ENCODE measurements at regions of chr9 and their contacts with region 1.

Region 1: GRCh38 chr9:613771-614347 is 227.6 kb upstream of the DMRT1 start:
- DNase-seq: peak; percentile 52 to 68
- H3K4me3 ChIP-seq: no peak overlapping the region
- H3K27ac ChIP-seq: no peak overlapping the region
- H3K4me1 ChIP-seq: no peaks in the 10 kb centered on the region
- H3K27me3 ChIP-seq: no peaks in the 10 kb centered on the region
- CTCF ChIP-seq: peak; percentile 72

Region 2: DNA sequence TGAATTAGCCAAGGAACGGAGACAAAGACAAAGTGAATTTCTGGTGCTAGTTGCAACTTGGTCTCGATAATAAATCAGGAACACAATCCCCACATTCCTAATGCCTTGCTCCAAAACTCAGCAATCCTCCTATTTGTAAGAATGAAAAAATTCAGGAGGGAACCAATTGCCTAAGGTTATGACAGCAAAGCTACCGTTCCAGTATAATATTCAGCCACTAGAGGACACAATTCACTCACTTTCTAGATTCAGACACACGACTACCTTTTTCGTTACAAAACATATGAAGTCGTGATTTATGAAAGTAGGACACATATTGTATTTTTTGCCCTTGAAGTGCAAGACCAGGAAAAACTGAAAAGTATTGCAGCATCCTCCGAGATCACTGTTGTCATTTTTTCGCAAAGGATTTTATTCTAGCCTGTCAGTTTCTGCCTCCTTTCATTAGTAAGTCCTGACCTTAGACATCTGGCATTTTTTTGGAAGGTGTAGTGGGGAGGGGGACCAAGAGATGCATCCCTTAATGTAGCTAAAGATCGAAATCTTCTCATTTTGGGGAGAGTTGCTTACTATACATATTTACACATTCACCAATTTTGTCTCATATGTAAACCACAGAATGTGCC is 266.1 kb before region 1 on chr9:
- CTCF ChIA-PET with region 1: no interaction called
- POLR2A ChIA-PET with region 1: no interaction called
- intact Hi-C with region 1: loop called (anchors 2 kb)
- DNase-seq: no peak
- H3K4me3 ChIP-seq: no peak overlapping the region
- H3K27ac ChIP-seq: no peak overlapping the region
- H3K4me1 ChIP-seq: no peaks in the 10 kb centered on the region
- H3K27me3 ChIP-seq: no peaks in the 10 kb centered on the region
- CTCF ChIP-seq: peak; percentile 76

Region 3: GRCh38 chr9:503881-504852 is 109.7 kb before region 1 on chr9:
- CTCF ChIA-PET with region 1: no interaction called
- POLR2A ChIA-PET with region 1: no interaction called
- intact Hi-C with region 1: loop called (anchors 10 kb)
- DNase-seq: peak; percentile 46 to 81
- H3K4me3 ChIP-seq: peak within 1 kb of the TSS; percentile 58; the same call in 1 of the 2 replicates
- H3K27ac ChIP-seq: no peak within 1 kb of the TSS
- H3K4me1 ChIP-seq: 0 out of 2 replicates have a peak, but pooled peaks cover 7% of the 10 kb centered on the region
- H3K27me3 ChIP-seq: no peaks in the 10 kb centered on the region
- CTCF ChIP-seq: no peak; the same call in 1 of the 2 replicates

Region 4: GRCh38 chr9:757246-757881 is 143.5 kb after region 1 on chr9:
- CTCF ChIA-PET with region 1: no interaction called
- POLR2A ChIA-PET with region 1: no interaction called
- intact Hi-C with region 1: loop called (anchors 1 kb)
- DNase-seq: no peak
- H3K4me3 ChIP-seq: no peak overlapping the region
- H3K27ac ChIP-seq: no peak overlapping the region
- H3K4me1 ChIP-seq: 0 out of 2 replicates have a peak, but pooled peaks cover 6% of the 10 kb centered on the region
- H3K27me3 ChIP-seq: no peaks in the 10 kb centered on the region
- CTCF ChIP-seq: peak; percentile 44; the same call in 1 of the 2 replicates

Region 5: GRCh38 chr9:806285-807156 is 192.7 kb after region 1 on chr9:
- CTCF ChIA-PET with region 1: no interaction called
- POLR2A ChIA-PET with region 1: no interaction called
- intact Hi-C with region 1: loop called (anchors 1 kb)
- DNase-seq: peak in 1 of 2 experiments; percentile 2
- H3K4me3 ChIP-seq: no peak overlapping the region
- H3K27ac ChIP-seq: no peak overlapping the region
- H3K4me1 ChIP-seq: no peaks in the 10 kb centered on the region
- H3K27me3 ChIP-seq: no peaks in the 10 kb centered on the region
- CTCF ChIP-seq: peak; percentile 71

Measured in PC-9 (cell line).